CD8-positive, alpha-beta T cell (primary cell): ENCODE measurements at regions of chr3 and their contacts with region 1.

Region 1: DNA sequence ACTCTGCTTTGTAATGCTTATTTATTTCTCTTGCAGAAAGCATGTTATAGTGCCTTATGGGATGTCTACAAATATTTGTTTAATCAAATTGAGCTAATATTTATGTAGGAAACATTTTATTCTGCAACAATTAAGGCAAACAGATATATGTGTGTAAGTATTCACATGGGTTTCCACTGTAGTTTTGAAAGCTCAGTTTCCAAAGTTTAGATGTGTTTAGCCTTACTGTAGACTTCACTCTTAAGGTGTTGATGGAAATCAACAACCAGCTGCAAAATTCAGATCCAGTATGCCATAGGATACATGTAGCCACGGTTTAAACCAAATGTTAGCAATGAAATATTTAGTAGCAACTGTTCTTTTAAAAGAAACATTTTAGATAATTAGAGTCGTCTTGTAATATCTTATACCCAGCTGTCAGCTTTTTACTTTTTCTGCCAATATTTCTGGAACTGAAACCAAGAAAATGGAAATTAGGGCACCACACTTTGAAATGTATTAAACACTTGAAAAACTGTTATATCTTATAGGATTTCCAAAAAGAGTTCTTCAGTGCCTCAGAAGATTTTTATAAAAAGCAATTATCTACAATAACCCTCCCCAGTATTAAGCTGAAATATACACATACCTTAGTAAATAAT is 18.5 kb downstream of the PIK3CA start:
- DNase-seq: no peak
- ATAC-seq: no peak
- H3K4me3 ChIP-seq: no peak overlapping the region
- H3K4me3 Mint-ChIP-seq: no peak overlapping the region
- H3K27ac ChIP-seq: no peak overlapping the region
- H3K27ac Mint-ChIP-seq: no peak overlapping the region
- H3K4me1 ChIP-seq: peaks cover 3% of the 10 kb centered on the region
- H3K4me1 Mint-ChIP-seq: peaks cover 64% of the 10 kb centered on the region
- H3K27me3 ChIP-seq: no peaks in the 10 kb centered on the region
- H3K27me3 Mint-ChIP-seq: no peaks in the 10 kb centered on the region
- CTCF ChIP-seq: no peak

Region 2: GRCh38 chr3:179181021-179181472 is 14.4 kb after region 1 on chr3:
- CTCF ChIA-PET with region 1: no interaction called
- POLR2A ChIA-PET with region 1: no interaction called
- intact Hi-C with region 1: loop called in 1 of 2 experiments (anchors 2 kb)
- DNase-seq: no peak
- ATAC-seq: no peak
- H3K4me3 ChIP-seq: no peak overlapping the region
- H3K4me3 Mint-ChIP-seq: no peak overlapping the region
- H3K27ac ChIP-seq: no peak overlapping the region
- H3K27ac Mint-ChIP-seq: no peak overlapping the region
- H3K4me1 ChIP-seq: peaks cover 30% of the 10 kb centered on the region
- H3K4me1 Mint-ChIP-seq: peaks cover 57% of the 10 kb centered on the region
- H3K27me3 ChIP-seq: no peaks in the 10 kb centered on the region
- H3K27me3 Mint-ChIP-seq: no peaks in the 10 kb centered on the region
- CTCF ChIP-seq: no peak

Region 3: DNA sequence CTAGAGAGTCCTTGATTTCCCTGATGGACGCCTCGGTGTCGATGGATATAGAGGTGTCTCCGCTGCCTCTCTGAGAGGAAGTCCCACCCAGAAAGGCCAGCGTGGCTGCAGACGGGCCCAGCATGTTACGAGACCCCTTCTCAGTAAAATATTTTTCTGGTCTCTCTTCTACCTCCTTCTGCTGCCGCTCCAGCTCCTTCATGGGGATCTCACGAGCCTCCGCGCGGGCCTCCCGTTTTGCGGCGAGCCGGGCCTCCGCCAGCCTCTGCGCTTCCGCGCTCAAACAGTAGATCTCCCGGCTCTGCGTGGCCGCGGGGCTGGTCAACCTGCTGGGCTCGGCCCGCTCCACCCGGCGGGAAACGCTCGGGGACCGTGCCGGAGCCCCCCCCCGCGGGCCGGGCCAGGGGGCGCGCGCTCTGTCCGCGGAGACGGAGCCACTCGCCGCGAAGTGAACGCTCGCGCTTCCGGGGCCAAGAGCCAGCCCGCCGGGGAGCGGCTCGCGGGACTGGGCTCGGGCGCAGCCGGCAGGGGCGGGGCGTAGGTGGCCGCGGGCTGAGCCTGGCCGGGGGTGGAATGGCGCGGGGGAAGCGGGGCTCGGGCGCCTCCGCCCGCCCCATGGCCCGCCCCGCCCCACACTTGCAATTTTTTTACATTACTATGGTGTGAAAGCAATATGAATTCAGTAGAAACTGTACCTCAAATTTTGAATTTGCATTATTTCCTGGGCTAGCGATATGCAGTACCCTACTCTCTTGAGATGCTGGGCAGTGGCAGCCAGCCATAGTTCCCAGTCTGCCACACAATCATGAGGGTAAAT is 94.5 kb after region 1 on chr3:
- CTCF ChIA-PET with region 1: no interaction called
- POLR2A ChIA-PET with region 1: no interaction called
- intact Hi-C with region 1: no loop called
- DNase-seq: peak; percentile 34 to 80 (median 62)
- ATAC-seq: peak; percentile 97
- H3K4me3 ChIP-seq: peak overlapping the region; percentile 49 to 54
- H3K4me3 Mint-ChIP-seq: peak overlapping the region; percentile 83
- H3K27ac ChIP-seq: peak overlapping the region in 1 of 2 experiments; percentile 20
- H3K27ac Mint-ChIP-seq: peak overlapping the region; percentile 24
- H3K4me1 ChIP-seq: peaks cover 6% of the 10 kb centered on the region
- H3K4me1 Mint-ChIP-seq: peaks cover 24% of the 10 kb centered on the region
- H3K27me3 ChIP-seq: no peaks in the 10 kb centered on the region
- H3K27me3 Mint-ChIP-seq: no peaks in the 10 kb centered on the region
- CTCF ChIP-seq: no peak

Region 4: GRCh38 chr3:179898024-179898423 is 731.3 kb after region 1 on chr3:
- CTCF ChIA-PET with region 1: no interaction called
- POLR2A ChIA-PET with region 1: no interaction called
- intact Hi-C with region 1: no loop called
- DNase-seq: peak in 2 of 9 experiments; percentile 14 to 45
- ATAC-seq: no peak
- H3K4me3 ChIP-seq: no peak overlapping the region
- H3K4me3 Mint-ChIP-seq: no peak overlapping the region
- H3K27ac ChIP-seq: no peak overlapping the region
- H3K27ac Mint-ChIP-seq: no peak overlapping the region
- H3K4me1 ChIP-seq: no peaks in the 10 kb centered on the region
- H3K4me1 Mint-ChIP-seq: no peaks in the 10 kb centered on the region
- H3K27me3 ChIP-seq: no peaks in the 10 kb centered on the region
- H3K27me3 Mint-ChIP-seq: peaks cover 10% of the 10 kb centered on the region
- CTCF ChIP-seq: no peak